ENCODE measurements at regions of chr9 and their contacts with region 1.

Region 1: DNA sequence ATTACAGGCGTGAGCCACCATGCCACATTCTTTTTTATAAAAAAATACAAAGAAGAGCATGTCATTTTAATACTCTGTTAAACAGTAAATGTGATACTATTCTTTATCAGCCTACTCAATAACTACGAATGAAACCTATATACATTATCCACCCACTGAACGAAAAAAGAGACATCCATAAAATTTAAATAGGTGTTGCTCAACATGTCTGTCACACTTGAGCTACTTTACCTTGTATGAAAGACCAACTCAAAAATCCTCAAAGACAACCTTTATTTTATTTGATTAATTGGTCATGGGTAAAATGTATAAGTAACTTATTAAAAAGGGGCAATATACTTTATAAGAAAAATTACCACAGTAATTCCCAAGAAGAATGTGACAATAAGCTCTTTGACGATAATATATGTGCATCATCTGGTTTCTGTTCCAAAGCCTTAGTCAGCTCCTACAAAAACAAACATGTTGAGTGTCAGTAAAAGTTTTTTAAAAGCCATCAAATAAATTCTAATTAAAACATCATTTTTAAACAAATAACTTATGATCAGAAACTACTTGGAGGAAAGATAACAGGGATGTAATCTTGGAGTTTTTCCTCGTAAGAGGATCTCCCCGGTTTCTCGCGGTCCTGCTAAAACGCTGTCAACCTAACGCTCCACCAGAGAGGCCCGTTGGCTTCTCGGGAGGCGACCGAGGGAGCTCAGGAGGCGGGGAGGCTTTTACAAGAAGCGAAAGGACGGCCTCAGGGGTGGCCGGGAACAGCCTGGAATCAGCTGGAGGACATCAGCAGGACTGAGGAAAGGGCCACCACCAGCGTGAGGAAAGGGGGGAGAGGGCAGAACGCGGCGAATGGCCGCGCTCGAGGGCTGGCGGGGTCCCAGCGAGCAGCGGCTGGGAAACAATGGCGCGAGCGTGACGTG is 13.5 kb upstream of the ANKRD18B start:
- DNase-seq: peak; percentile 39
- H3K4me3 ChIP-seq: peak overlapping the region; percentile 60 to 62 (median 60)
- H3K27ac ChIP-seq: peak overlapping the region; percentile 73 to 84 (median 80)
- H3K4me1 ChIP-seq: peaks cover 0 to 8% (median 2%) of the 10 kb centered on the region in 4 donors
- H3K27me3 ChIP-seq: no peaks in the 10 kb centered on the region
- CTCF ChIP-seq: no peak
- EP300 ChIP-seq: no peak
- POLR2A ChIP-seq: no peak

Region 2: GRCh38 chr9:33458444-33458843 is 52.1 kb before region 1 on chr9:
- in situ Hi-C with region 1: no loop called
- intact Hi-C with region 1: no loop called
- DNase-seq: no peak
- H3K4me3 ChIP-seq: no peak overlapping the region
- H3K27ac ChIP-seq: no peak overlapping the region
- H3K4me1 ChIP-seq: peaks cover 0 to 11% (median 3%) of the 10 kb centered on the region in 4 donors
- H3K27me3 ChIP-seq: no peaks in the 10 kb centered on the region
- CTCF ChIP-seq: no peak
- EP300 ChIP-seq: no peak
- POLR2A ChIP-seq: no peak

Region 3: GRCh38 chr9:33623658-33624586 is 113.4 kb after region 1 on chr9:
- in situ Hi-C with region 1: loop called in 1 of 4 experiments (anchors 25 kb)
- intact Hi-C with region 1: no loop called
- DNase-seq: peak; percentile 62
- H3K4me3 ChIP-seq: no peak overlapping the region
- H3K27ac ChIP-seq: no peak overlapping the region
- H3K4me1 ChIP-seq: no peaks in the 10 kb centered on the region
- H3K27me3 ChIP-seq: no peaks in the 10 kb centered on the region
- CTCF ChIP-seq: peak; percentile 81 to 85 (median 84)
- EP300 ChIP-seq: no peak
- POLR2A ChIP-seq: no peak